A673 (cell line): ENCODE measurements at regions of chr5 and their contacts with region 1.

Region 1: DNA sequence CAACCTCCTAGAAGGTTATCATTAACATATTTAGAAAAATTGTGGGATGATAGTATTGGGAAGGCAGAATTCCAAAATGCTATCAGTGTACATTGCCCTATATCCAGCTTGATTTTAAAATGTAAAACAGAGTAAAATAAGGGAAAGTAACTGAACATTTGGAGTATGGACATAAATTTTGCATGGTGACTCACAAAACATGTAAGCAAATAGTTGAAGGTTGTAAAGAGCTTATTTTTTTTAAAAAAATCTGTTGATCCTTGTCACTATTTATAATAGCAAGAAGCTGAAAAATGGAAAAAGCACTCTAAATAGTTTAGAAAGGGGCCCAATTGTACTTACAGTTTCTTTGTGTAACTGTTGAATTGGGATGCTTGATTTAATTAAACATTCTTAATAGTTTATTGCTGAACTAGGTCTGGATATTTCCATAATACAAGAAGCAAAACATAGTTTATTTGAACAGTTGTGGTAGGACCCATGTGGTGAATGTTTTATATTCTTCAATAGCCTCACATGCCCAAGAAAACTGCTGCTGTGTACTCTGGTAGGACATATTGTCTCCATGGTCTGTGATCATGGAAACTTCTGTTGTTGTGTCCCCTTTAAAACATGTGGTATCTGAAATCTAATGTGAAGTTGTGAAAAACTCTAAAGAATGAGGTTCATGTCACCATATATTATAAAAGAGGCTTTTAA is 82.4 kb downstream of the NNT start:
- DNase-seq: no peak
- H3K4me3 ChIP-seq: no peak overlapping the region
- H3K27ac ChIP-seq: no peak overlapping the region
- H3K4me1 ChIP-seq: peaks cover 8% of the 10 kb centered on the region
- H3K27me3 ChIP-seq: no peaks in the 10 kb centered on the region
- CTCF ChIP-seq: no peak

Region 2: DNA sequence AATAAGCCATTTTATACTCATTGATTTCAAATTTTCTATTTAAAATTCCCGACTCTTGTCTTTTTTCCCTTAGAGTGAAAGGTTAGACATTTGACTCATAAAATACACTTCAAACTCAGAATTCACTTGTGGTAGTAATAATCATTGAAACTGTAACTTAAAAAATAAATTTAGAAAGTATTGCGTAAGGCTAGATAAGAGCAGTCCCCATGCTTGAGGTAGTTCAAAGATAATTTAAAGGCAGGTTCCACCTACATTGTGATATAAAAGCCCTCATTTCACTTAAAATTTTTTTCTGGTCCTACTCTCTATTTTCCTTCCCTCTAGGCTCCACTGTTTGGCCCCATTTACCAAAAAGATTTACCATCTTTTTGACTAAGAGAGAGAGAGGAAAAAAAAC is 1699.5 kb before region 1 on chr5:
- CTCF ChIA-PET with region 1: no interaction called
- POLR2A ChIA-PET with region 1: no interaction called
- intact Hi-C with region 1: no loop called
- DNase-seq: no peak
- H3K4me3 ChIP-seq: no peak overlapping the region
- H3K27ac ChIP-seq: no peak overlapping the region
- H3K4me1 ChIP-seq: no peaks in the 10 kb centered on the region
- H3K27me3 ChIP-seq: peaks cover 49% of the 10 kb centered on the region
- CTCF ChIP-seq: no peak

Region 3: GRCh38 chr5:43772764-43773477 is 87.5 kb after region 1 on chr5:
- CTCF ChIA-PET with region 1: no interaction called
- POLR2A ChIA-PET with region 1: no interaction called
- intact Hi-C with region 1: no loop called
- DNase-seq: peak; percentile 92
- H3K4me3 ChIP-seq: peak overlapping the region; percentile 8
- H3K27ac ChIP-seq: peak overlapping the region; percentile 97
- H3K4me1 ChIP-seq: peaks cover 50% of the 10 kb centered on the region
- H3K27me3 ChIP-seq: no peaks in the 10 kb centered on the region
- CTCF ChIP-seq: no peak

Region 4: GRCh38 chr5:43874772-43875171 is 189.4 kb after region 1 on chr5:
- CTCF ChIA-PET with region 1: no interaction called
- POLR2A ChIA-PET with region 1: no interaction called
- intact Hi-C with region 1: no loop called
- DNase-seq: no peak
- H3K4me3 ChIP-seq: no peak overlapping the region
- H3K27ac ChIP-seq: no peak overlapping the region
- H3K4me1 ChIP-seq: no peaks in the 10 kb centered on the region
- H3K27me3 ChIP-seq: no peaks in the 10 kb centered on the region
- CTCF ChIP-seq: no peak

Region 5: GRCh38 chr5:44869928-44870327 is 1184.5 kb after region 1 on chr5:
- CTCF ChIA-PET with region 1: no interaction called
- POLR2A ChIA-PET with region 1: interaction called, 29 read pairs
- intact Hi-C with region 1: no loop called
- DNase-seq: no peak
- H3K4me3 ChIP-seq: no peak overlapping the region
- H3K27ac ChIP-seq: no peak overlapping the region
- H3K4me1 ChIP-seq: no peaks in the 10 kb centered on the region
- H3K27me3 ChIP-seq: no peaks in the 10 kb centered on the region
- CTCF ChIP-seq: no peak